A549 (cell line): ENCODE measurements at regions of chr2 and their contacts with region 1.

Region 1: GRCh38 chr2:10408649-10409579 is 39.2 kb downstream of the ODC1 start:
- DNase-seq: peak; percentile 93 to 94
- ATAC-seq: peak; percentile 58 to 80
- H3K4me3 ChIP-seq: peak overlapping the region; percentile 13; the same call in 2 of the 3 replicates
- H3K27ac ChIP-seq: peak overlapping the region; percentile 93 to 95
- H3K4me1 ChIP-seq: peaks cover 63% of the 10 kb centered on the region
- CTCF ChIP-seq: peak; percentile 99
- EP300 ChIP-seq: no peak; a peak in 1 of 5 replicates
- POLR2A ChIP-seq: no peak
- RAD21 ChIP-seq: peak; percentile 99

Region 2: DNA sequence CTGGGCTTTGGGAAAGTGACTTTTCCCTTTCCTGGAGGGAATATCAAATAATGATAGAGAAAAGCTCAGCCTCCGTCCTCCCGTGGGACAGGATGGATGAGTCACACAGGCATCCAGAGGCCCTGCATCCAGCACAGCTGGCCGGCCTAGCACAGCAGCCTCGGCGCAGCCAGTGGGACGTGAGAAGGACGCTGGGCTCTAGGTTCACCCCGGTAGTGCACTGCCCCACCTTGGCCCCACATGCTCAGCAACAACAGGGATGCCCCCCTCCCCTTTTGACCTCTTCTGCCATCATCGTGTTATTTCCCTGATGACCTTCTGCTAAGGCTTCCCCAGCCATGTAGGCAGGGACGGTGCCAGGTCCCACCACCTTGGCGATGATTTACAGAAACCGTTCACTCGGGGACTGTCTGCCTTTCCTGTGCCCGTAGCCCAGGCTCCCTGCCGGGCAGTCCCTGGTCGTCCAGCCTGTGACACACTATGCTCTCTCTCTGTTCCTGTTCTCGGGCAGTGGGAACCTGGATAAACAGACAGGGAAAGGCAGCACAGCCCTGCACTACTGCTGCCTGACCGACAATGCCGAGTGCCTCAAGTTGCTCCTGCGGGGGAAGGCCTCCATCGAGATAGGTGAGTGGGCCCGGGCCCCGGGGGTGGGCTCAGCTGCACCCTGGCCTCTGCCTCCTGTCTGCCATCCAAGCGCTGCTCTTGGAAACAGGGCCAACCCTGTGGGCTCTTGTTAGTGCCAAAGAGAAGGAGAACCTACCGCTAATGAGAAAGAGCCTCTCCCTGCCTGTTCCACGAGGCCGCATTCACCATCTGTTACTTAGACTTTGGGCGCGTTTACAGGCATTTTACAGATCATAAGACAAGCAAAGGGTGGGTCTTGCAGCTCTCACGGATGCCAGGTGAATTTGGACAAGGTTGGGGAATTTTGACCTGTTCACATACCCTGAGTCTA is 1030.2 kb before region 1 on chr2:
- CTCF ChIA-PET with region 1: no interaction called
- POLR2A ChIA-PET with region 1: no interaction called
- DNase-seq: peak; percentile 61 to 82
- ATAC-seq: peak; percentile 67 to 73
- H3K4me3 ChIP-seq: no peak overlapping the region
- H3K27ac ChIP-seq: peak overlapping the region; percentile 92 to 96
- H3K4me1 ChIP-seq: peaks cover 55% of the 10 kb centered on the region
- CTCF ChIP-seq: no peak
- EP300 ChIP-seq: no peak
- POLR2A ChIP-seq: no peak
- RAD21 ChIP-seq: no peak; a peak in 1 of 5 replicates

Region 3: DNA sequence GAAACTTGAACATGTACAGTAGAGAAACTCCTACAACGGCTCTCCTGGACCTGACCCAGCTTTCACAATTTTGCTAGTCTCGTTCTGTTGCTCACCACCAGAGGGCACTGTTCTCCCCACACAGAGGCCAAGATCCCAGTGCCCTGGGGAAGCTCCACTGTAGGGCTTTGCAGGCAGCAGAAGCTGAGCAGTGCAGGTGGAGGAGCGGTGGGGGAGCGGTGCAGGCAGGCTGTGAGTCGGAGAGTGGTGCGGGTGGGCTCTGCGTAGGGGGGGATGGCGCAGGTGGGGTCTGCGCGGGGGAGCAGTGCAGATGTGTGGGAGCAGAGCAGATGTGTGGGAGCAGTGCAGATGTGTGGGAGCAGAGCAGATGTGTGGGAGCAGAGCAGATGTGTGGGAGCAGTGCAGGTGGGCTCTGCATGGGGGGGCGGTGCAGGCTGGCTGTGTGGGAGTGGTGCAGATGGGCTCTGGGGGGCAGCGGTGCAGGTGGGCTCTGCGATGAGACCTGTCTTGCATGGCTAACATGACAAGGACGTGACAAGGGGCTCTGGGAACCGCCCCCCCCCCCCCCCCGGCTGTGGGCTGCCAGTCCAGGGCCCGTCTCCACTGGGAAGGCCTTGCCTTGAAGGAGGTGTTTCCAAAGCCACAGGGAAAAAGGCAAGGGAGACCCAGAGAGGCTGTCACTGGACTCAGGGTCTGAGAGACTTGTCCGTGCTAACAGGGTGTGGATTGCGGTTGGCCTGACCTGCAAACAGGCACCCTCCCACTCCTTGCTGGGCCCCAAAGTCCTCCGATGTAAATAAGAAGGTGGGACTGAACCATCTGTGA is 336.0 kb before region 1 on chr2:
- CTCF ChIA-PET with region 1: interaction called, 25 read pairs
- POLR2A ChIA-PET with region 1: interaction called, 4 read pairs
- DNase-seq: peak; percentile 88 to 95
- ATAC-seq: peak; percentile 94 to 96
- H3K4me3 ChIP-seq: no peak overlapping the region
- H3K27ac ChIP-seq: no peak overlapping the region
- H3K4me1 ChIP-seq: peaks cover 4% of the 10 kb centered on the region; the same call in 1 of the 3 replicates
- CTCF ChIP-seq: peak; percentile 95
- EP300 ChIP-seq: no peak
- POLR2A ChIP-seq: no peak
- RAD21 ChIP-seq: peak; percentile 81 to 85

Region 4: DNA sequence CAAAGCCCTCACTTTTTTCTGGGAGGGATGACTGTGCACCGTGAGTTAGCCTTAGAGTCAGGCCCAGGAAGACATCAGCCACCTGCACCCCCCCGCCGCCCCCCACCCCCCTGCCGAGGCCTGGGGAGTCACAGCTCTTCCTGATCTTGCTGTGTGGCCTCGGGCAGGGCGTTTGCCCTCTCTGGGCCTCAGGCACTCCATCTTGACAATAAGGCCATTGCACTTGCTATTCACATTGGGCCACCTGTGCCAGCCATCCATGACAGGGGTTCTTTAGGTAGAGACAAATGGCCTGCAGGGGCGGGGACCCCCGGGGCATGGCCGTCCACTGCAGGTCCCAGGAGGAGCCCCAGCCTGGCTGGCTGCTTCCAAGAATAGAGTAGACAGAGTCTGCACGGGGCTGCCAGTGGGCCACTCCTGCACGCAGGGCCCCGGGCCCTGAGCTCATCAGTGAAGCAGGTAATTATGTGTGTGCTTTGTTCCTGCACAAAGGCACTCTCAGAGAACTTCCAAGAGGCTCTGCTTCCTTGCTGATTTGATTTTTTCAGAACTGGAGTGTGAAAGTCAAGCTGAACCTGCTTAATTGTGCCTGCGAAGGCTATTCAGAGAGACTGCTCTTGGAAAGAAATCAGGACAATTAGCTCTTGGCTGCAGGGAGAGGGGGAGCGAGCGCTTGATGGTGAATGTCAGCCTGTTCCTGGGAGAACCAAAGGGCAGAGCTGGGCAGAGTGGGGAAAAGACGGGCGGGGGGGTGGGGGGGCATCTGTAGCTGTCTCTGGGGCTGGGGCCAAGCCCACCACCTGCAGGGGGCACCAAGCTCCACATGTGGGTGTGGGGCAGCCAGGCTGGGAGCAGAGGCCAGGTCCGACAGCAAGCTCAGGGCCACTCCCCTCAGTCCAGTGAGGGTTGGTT is 246.1 kb before region 1 on chr2:
- CTCF ChIA-PET with region 1: interaction called, 53 read pairs
- POLR2A ChIA-PET with region 1: no interaction called
- DNase-seq: peak in 1 of 2 experiments; percentile 27
- ATAC-seq: peak; percentile 20 to 38; a peak in 2 of 6 replicates
- H3K4me3 ChIP-seq: no peak overlapping the region
- H3K27ac ChIP-seq: no peak overlapping the region
- H3K4me1 ChIP-seq: no peaks in the 10 kb centered on the region
- CTCF ChIP-seq: 0 out of 3 replicates have a peak, but pooled peaks have one; percentile 7
- EP300 ChIP-seq: no peak
- POLR2A ChIP-seq: no peak
- RAD21 ChIP-seq: peak; percentile 21 to 31; a peak in 2 of 5 replicates

Region 5: GRCh38 chr2:10260130-10260529 is 148.8 kb before region 1 on chr2:
- CTCF ChIA-PET with region 1: interaction called, 38 read pairs
- POLR2A ChIA-PET with region 1: no interaction called
- DNase-seq: no peak
- ATAC-seq: no peak; a peak in 1 of 6 replicates
- H3K4me3 ChIP-seq: no peak overlapping the region
- H3K27ac ChIP-seq: no peak overlapping the region
- H3K4me1 ChIP-seq: peaks cover 12% of the 10 kb centered on the region
- CTCF ChIP-seq: no peak
- EP300 ChIP-seq: no peak
- POLR2A ChIP-seq: no peak
- RAD21 ChIP-seq: no peak

Region 6: DNA sequence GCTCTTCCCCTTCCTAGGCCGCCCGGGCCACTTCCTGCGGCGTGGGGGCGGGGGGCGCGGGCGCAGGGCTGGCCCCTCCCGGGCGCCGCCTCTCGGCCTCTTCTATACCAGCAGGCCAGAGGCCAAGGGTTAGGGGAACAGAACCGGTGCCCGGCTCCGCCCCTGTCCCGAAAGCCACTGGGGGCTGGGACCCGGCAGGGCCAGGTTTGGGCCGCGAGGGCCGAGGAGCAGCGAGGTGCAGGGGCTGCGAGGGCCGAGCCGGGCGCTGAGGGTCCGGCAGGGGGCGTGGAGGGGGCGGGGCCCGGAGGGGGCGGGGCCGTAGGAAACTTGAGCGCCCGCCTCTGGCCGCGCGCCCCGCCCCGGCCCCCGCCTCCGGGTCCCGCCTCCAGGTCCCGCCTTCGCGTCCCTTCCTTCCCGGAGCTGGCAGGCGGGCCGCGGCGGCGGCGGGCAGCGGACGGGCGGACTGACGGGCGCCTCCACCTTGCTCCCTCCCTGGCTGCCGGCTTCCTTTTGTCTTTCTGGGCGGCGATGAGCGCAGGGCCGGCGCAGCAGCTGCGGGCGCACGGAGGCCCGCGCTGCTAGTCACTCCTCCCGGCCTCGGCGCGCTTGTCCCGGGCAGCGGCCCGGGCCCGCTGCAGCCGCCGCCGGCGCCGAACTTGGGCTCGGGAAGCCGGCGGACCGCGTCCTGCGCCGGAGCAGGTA is 106.3 kb before region 1 on chr2 and contains the start of gene HPCAL1:
- CTCF ChIA-PET with region 1: interaction called, 215 read pairs
- POLR2A ChIA-PET with region 1: interaction called, 19 read pairs
- DNase-seq: peak; percentile 92 to 93
- ATAC-seq: peak; percentile 79 to 91
- H3K4me3 ChIP-seq: peak within 1 kb of the TSS; percentile 84
- H3K27ac ChIP-seq: peak within 1 kb of the TSS; percentile 95 to 98
- H3K4me1 ChIP-seq: peaks cover 62% of the 10 kb centered on the region
- CTCF ChIP-seq: peak; percentile 68
- EP300 ChIP-seq: no peak
- POLR2A ChIP-seq: peak; percentile 91
- RAD21 ChIP-seq: peak; percentile 36 to 78; a peak in 4 of 5 replicates
- polyA plus RNA-seq, gene HPCAL1: 37.8 and 44.4 TPM in 2 replicates

Region 7: DNA sequence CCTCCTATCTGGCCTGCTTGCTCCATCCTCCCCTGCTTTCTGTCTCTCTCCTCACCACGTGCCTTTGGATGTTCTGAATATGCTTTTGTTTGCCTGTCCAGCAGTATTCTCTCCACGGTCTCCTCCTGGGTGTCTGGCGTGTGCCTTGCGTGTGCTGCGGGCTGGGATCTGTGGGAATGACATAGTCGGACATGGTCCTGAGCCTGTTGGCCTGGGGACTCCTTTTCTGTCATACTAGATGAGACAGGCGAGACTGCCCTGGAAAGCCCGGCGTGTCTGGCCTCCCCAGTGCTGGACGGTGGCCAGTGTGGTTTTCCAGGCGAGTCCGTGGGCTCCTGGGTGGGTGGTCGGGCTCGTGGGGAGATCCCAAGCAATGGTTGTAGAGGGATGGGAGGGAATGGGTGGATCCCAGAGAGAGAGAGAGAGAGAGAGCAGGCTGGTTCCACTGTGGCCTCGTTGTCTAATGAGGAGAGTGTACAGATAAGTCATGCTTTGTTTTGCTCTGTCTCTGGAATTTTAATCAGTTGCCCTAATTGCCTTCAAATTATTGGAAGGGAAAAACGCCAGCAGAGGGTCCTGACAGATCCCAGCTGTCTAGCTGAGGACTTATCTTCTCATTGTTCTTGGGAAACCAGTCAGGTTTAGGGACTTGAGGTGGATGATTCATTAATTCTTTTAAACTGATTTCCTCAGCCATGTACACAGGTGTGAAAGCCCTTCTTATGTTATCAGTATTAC is 47.9 kb before region 1 on chr2:
- CTCF ChIA-PET with region 1: interaction called, 38 read pairs
- POLR2A ChIA-PET with region 1: no interaction called
- DNase-seq: no peak
- ATAC-seq: no peak
- H3K4me3 ChIP-seq: no peak overlapping the region
- H3K27ac ChIP-seq: 0 out of 6 replicates have a peak overlapping the region, but pooled peaks of 1 of the 2 experiments have one; percentile 3
- H3K4me1 ChIP-seq: peaks cover 14% of the 10 kb centered on the region
- CTCF ChIP-seq: no peak
- EP300 ChIP-seq: no peak
- POLR2A ChIP-seq: no peak
- RAD21 ChIP-seq: no peak

Region 8: GRCh38 chr2:10434886-10435819 is 26.2 kb after region 1 on chr2:
- CTCF ChIA-PET with region 1: interaction called, 155 read pairs
- POLR2A ChIA-PET with region 1: interaction called, 3 read pairs
- DNase-seq: peak; percentile 80 to 91
- ATAC-seq: peak; percentile 60 to 87
- H3K4me3 ChIP-seq: no peak overlapping the region
- H3K27ac ChIP-seq: peak overlapping the region in 1 of 2 experiments; percentile 68; a peak in 4 of 6 replicates
- H3K4me1 ChIP-seq: peaks cover 18% of the 10 kb centered on the region
- CTCF ChIP-seq: peak; percentile 99
- EP300 ChIP-seq: no peak
- POLR2A ChIP-seq: no peak
- RAD21 ChIP-seq: peak; percentile 100

Region 9: DNA sequence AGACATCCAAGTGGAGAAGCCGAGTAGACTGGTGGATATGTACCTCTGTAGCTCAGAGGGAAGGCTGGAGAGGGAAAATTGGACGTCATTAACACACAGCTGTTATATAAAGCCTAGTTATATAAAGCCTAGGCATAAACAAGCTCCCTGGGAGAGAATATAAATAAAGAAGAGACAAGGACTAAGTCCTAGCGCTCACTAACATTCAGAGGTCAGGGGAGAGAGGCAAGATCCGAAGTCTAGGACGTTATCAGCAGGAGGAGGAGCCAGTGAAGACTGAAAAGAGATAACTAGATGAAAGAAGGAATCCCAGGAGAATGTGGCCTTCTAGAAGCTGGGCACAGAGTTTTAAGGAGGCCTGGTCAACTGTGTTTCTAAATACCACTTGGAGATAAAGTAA is 225.6 kb after region 1 on chr2:
- CTCF ChIA-PET with region 1: no interaction called
- POLR2A ChIA-PET with region 1: no interaction called
- DNase-seq: no peak
- ATAC-seq: no peak; a peak in 1 of 6 replicates
- H3K4me3 ChIP-seq: no peak overlapping the region
- H3K27ac ChIP-seq: no peak overlapping the region
- H3K4me1 ChIP-seq: no peaks in the 10 kb centered on the region
- CTCF ChIP-seq: no peak
- EP300 ChIP-seq: no peak
- POLR2A ChIP-seq: no peak
- RAD21 ChIP-seq: no peak

Region 10: DNA sequence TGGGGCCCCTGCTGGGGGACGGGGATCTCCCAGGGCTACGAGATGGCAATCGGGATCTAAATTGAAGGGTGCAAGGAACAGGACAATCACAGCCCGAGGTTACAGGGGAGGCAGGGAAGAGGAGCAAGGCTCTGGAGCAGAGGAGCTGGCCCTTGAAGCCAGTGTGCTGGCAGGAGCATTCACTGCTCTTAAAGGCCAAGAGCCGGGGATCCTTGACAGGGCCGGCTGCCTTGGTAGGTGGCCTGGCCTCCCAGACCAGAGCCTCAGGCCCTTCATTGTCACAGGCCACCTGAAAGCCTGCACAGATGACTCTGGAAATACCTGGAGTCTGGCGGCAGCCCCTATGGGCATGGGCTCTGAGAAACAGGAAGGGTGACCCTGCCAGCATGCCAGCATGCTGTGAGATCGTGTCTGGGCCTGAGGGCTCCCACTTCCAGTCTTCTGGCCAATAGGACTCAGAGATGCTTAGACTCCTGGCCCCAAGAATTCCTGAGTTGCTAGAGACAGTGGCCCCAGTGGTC is 365.0 kb after region 1 on chr2:
- CTCF ChIA-PET with region 1: no interaction called
- POLR2A ChIA-PET with region 1: no interaction called
- DNase-seq: no peak
- ATAC-seq: peak in 1 of 2 experiments; percentile 4; a peak in 2 of 6 replicates
- H3K4me3 ChIP-seq: no peak overlapping the region
- H3K27ac ChIP-seq: no peak overlapping the region
- H3K4me1 ChIP-seq: no peaks in the 10 kb centered on the region
- CTCF ChIP-seq: no peak
- EP300 ChIP-seq: no peak
- POLR2A ChIP-seq: no peak
- RAD21 ChIP-seq: no peak